ENCODE measurements at regions of chr7 and their contacts with region 1.

Region 1: DNA sequence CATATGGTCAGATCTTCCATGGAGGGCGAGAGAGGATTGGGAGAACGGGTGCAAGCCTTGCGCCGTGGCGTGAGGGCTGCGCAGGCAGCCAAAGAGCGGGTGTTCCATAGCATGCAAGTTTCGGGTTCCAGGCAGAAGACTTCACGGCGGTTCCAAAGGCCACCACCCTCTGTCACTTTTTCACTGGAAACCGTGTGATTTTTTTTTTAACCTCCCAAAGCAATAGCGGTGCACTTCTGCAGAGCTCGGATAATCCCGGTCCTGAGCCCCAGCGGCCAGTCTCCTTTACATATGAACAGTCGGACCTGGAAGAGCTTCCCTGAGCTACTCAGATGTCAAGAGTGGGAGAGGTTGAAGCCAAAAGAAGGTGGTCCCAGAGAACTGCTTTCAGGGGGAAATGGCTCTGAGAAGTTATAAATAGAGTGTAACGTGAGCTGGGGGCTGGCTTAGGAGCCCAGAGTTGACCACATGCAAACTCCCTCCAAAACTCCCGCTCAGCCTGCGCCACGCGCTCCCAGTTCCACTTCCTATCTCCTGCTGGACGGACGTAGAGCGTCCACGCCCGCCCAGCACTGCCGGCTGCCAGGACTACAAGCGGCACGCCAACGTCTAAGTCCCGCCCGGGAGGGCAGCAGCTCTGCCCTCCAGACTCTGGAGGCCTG is at the start of gene MEOX2:
- DNase-seq: peak; percentile 92
- H3K4me3 ChIP-seq: peak within 1 kb of the TSS; percentile 61 to 73 (median 68)
- H3K27ac ChIP-seq: peak within 1 kb of the TSS; percentile 79 to 89 (median 86)
- H3K4me1 ChIP-seq: peaks cover 7 to 37% (median 21%) of the 10 kb centered on the region in 4 donors
- H3K27me3 ChIP-seq: peaks cover 0 to 43% (median 13%) of the 10 kb centered on the region in 4 donors
- CTCF ChIP-seq: no peak
- EP300 ChIP-seq: no peak
- POLR2A ChIP-seq: peak; percentile 18
- total RNA-seq, gene MEOX2: 3.6 to 32.3 (median 13.0) TPM

Region 2: GRCh38 chr7:14973712-14974428 is 712.6 kb before region 1 on chr7:
- intact Hi-C with region 1: no loop called
- DNase-seq: no peak
- H3K4me3 ChIP-seq: no peak overlapping the region
- H3K27ac ChIP-seq: no peak overlapping the region
- H3K4me1 ChIP-seq: peaks cover 0 to 6% (median 0%) of the 10 kb centered on the region in 4 donors
- H3K27me3 ChIP-seq: no peaks in the 10 kb centered on the region
- CTCF ChIP-seq: no peak
- EP300 ChIP-seq: no peak
- POLR2A ChIP-seq: no peak

Region 3: GRCh38 chr7:15370441-15370840 is 316.0 kb before region 1 on chr7:
- intact Hi-C with region 1: no loop called
- DNase-seq: no peak
- H3K4me3 ChIP-seq: no peak overlapping the region
- H3K27ac ChIP-seq: no peak overlapping the region
- H3K4me1 ChIP-seq: no peaks in the 10 kb centered on the region
- H3K27me3 ChIP-seq: no peaks in the 10 kb centered on the region
- CTCF ChIP-seq: no peak
- EP300 ChIP-seq: no peak
- POLR2A ChIP-seq: no peak

Region 4: DNA sequence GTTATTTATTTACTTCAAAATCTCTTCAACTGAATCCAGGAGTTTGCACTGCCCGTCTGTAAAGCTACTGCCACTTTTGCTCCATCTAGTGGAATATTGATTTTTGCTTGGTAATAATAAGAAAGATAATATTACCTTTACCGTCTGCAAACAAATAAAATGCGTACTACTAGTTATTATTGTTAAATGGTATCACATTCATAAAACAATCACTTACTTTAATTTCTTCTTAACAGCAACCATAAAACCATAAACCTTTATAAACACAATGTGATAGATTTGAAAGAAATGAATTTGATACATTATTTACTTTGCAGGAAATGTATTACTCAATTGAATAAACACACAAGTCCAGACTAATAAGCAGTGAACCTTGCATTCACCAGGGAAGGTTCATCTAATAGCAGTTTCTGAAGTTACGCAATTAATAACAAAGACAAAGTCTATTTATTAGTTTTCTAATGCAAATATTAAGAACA is 131.0 kb before region 1 on chr7:
- intact Hi-C with region 1: loop called (anchors 10 kb)
- DNase-seq: no peak
- H3K4me3 ChIP-seq: no peak overlapping the region
- H3K27ac ChIP-seq: no peak overlapping the region
- H3K4me1 ChIP-seq: peaks cover 0 to 17% (median 4%) of the 10 kb centered on the region in 4 donors
- H3K27me3 ChIP-seq: no peaks in the 10 kb centered on the region
- CTCF ChIP-seq: peak in 2 of 3 experiments; percentile 29 to 31
- EP300 ChIP-seq: no peak
- POLR2A ChIP-seq: no peak

Region 5: DNA sequence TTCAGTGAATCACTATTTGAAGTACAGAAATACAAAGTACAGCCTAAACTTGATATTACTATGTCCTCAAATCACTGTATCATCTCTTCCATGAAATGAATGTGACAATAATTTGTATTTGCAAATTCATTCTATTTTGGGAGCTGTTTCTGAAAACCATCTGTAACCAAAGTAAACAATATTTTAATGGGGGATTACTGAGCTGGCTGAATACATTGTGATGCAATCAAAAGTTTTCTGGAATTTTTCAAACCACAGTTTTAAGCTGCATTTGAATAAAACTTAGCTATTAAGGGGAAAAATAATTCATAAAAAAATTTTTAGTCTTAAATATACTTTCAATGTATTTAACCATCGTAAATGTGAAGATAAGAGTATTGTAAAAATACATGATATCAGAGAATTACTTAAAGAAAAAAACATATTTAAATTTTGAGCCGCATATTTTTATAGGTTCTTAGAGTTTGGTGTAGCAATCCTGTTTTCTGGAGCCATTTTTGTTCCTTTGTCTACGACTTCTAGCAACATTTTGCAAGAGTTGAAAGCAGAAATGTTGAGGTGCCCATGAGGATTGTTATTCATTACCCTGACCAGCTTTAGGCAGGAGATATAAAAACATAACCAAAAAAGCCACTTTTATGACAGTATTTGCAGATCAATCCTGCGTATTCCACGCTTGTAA is 78.8 kb before region 1 on chr7:
- intact Hi-C with region 1: no loop called
- DNase-seq: no peak
- H3K4me3 ChIP-seq: no peak overlapping the region
- H3K27ac ChIP-seq: no peak overlapping the region
- H3K4me1 ChIP-seq: peaks cover 0 to 4% (median 0%) of the 10 kb centered on the region in 4 donors
- H3K27me3 ChIP-seq: no peaks in the 10 kb centered on the region
- CTCF ChIP-seq: no peak
- EP300 ChIP-seq: no peak
- POLR2A ChIP-seq: no peak

Region 6: GRCh38 chr7:15821484-15822427 is 135.3 kb after region 1 on chr7:
- intact Hi-C with region 1: no loop called
- DNase-seq: no peak
- H3K4me3 ChIP-seq: no peak overlapping the region
- H3K27ac ChIP-seq: no peak overlapping the region
- H3K4me1 ChIP-seq: peaks cover 0 to 5% (median 0%) of the 10 kb centered on the region in 4 donors
- H3K27me3 ChIP-seq: no peaks in the 10 kb centered on the region
- CTCF ChIP-seq: no peak
- EP300 ChIP-seq: no peak
- POLR2A ChIP-seq: no peak

Measured in esophagus muscularis mucosa (tissue), 4 donors.